ENCODE measurements at regions of chr6 and their contacts with region 1.

Region 1: DNA sequence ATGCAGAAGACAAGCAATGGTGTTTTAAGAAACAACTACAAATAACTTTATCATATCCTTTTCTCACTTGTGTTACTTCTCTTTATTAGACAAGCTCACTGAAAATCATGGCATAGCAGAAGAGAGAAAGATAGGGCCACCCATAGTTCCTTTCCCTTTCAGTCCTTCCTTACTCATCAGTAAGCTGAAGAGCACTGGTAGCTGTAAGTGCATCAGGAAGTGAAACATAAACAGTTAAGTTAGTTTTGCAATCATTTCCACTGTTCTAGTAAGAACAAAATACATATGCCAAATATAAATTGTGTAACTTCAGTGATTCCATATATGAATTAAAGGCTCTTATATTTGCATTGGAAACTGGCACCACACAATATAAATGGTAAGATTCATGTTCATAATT is 220.1 kb downstream of the HACE1 start:
- DNase-seq: no peak
- ATAC-seq: peak; percentile 66

Region 2: GRCh38 chr6:104669483-104669882 is 29.8 kb after region 1 on chr6:
- intact Hi-C with region 1: no loop called
- DNase-seq: no peak
- ATAC-seq: no peak

Region 3: DNA sequence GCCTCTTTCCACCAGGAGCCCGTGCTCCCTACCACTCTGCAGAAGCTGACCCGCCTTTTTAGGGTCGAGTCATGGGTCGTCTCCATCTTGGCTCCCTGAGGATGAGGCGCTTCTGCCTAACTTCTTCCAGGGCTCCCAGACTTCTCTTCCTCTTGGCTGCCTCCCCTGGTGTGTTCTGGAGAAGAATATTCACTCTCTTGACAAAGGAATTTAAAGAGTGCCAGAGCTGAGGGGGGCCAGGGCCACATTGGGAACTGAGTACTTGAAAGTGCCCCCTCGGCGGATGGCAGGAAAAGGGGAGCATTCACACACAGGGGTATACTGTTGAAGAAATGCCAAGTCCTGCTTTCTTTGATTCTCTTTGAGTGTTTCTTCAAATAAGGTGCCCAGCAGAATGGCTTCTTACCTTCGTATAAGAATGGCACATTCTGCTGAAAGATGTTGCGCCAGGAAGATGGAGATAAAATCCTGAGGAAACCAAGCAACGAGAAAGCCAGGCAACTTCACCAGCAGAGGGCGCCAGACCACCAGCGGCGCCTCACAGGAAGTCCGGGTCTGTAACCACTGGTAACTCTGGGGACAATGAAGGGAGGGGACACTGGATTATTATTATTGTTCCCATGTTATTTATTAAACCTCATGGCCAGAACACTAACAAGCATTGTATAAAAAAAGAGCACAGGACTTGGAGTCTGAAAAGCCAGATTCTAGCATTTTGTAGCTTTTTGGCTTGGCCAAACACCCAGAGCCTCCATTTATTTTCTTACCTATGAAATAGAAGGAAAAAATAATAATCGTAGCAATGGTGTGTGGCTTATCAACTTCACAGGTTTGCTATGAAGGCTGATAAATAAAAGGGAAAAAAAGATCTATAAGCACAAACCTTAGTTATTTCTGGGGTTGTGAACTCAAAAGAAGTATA is 43.3 kb after region 1 on chr6:
- intact Hi-C with region 1: no loop called
- DNase-seq: peak; percentile 80
- ATAC-seq: no peak

Region 4: GRCh38 chr6:104705095-104705707 is 65.5 kb after region 1 on chr6:
- intact Hi-C with region 1: loop called (anchors 2 kb)
- DNase-seq: no peak
- ATAC-seq: peak; percentile 68

Measured in Right ventricle myocardium inferior (tissue), 1 donor.